SK-N-SH (cell line): ENCODE measurements at regions of chr10 and their contacts with region 1.

Region 1: GRCh38 chr10:97765201-97765600 is 6.6 kb downstream of the SFRP5 start:
- DNase-seq: no peak
- H3K4me3 ChIP-seq: no peak overlapping the region
- H3K27ac ChIP-seq: no peak overlapping the region
- H3K4me1 ChIP-seq: no peaks in the 10 kb centered on the region; a peak in 1 of 4 replicates
- H3K27me3 ChIP-seq: no peaks in the 10 kb centered on the region; the same call in 1 of the 2 replicates
- CTCF ChIP-seq: no peak
- EP300 ChIP-seq: no peak
- RAD21 ChIP-seq: no peak

Region 2: GRCh38 chr10:97543025-97543575 is 222.1 kb before region 1 on chr10:
- CTCF ChIA-PET with region 1: no interaction called
- POLR2A ChIA-PET with region 1: no interaction called
- DNase-seq: no peak
- H3K4me3 ChIP-seq: no peak overlapping the region
- H3K27ac ChIP-seq: peak overlapping the region; percentile 77 to 100
- H3K4me1 ChIP-seq: peaks cover 19 to 56% of the 10 kb centered on the region in 2 experiments; a peak in 3 of 4 replicates
- H3K27me3 ChIP-seq: no peaks in the 10 kb centered on the region
- CTCF ChIP-seq: no peak
- EP300 ChIP-seq: peak in 1 of 2 experiments; percentile 90; a peak in 1 of 4 replicates
- RAD21 ChIP-seq: no peak

Region 3: DNA sequence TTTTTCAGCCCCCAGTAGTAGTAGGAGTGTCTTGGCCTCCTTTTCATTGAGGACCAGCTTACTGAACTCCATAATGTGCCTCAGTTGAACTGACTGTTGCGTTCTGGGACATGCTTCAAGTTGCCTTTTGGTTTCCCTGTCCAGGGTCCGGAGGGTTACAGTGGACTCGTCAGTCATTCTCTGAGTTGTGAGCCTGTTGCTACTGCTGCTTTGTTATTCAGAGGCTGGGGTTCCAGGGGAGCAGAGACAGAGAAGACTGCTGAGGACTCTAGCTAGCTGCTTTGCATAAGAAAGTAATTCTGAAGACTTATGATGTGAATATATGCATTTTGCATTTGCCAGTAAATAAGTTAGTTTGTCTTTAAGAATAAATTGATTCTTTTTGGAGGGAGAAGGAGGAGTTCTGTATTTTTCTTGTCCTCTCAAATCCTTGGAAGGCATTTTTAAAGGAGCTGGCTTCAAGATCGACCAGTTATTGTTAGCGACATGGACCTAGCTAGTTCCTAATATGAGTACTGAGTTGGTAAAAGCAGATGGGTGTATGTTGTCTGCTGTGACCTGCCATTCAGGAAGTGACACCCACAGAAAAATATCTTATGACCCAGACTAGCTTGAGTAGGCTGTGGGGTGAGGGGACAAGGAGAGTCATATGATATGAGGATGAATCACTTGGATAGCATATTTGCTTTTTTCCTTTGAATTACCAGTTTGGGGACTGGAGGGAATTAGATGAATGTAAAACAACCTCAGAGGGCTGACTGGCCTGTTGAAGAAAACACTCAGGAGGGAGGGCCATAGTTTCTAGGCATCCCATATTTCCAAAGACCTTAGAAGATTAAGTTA is 116.4 kb before region 1 on chr10:
- CTCF ChIA-PET with region 1: no interaction called
- POLR2A ChIA-PET with region 1: no interaction called
- DNase-seq: no peak
- H3K4me3 ChIP-seq: no peak overlapping the region
- H3K27ac ChIP-seq: peak overlapping the region; percentile 81 to 95
- H3K4me1 ChIP-seq: peaks cover 4 to 22% of the 10 kb centered on the region in 2 experiments; a peak in 3 of 4 replicates
- H3K27me3 ChIP-seq: no peaks in the 10 kb centered on the region
- CTCF ChIP-seq: no peak
- EP300 ChIP-seq: peak in 1 of 2 experiments; percentile 68; a peak in 1 of 4 replicates
- RAD21 ChIP-seq: no peak

Region 4: DNA sequence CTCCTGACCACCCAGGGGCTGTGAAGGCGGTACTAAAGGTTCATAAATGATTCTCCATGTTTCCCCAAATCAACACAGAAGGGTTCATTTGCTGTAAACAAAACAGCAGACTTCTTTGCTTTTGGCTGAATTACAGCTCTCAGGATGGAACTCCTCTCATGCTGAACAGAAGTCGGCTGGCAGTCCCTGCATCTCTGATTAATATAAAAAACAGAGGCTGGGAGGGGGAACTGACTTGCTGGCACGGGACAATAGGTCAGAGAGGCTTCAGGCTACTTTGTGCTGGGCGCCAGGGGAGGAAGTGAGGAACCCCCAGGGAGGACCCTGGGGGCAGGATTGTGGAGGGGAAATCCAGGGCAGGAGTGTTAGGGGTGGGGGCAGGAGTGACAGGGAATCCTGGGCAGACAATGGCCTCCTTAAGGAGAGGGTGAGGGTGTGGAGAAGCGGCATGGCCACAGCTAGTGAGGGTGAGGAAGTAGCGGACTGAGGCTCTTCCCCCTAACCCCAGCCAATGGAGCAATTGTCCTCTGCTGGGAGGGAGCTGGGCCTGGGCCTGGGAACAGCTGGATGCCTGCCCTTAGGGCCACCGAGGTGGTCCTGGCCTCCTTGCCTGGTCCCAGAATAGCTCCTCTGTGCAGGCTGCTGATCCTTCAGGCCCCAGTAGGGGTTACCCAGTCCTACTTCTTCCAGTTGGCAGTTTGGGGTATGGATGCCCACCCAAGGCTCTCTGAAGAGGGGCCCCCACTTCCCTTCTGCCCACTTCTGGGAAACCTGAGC is 15.8 kb after region 1 on chr10:
- CTCF ChIA-PET with region 1: interaction called, 13 read pairs
- POLR2A ChIA-PET with region 1: no interaction called
- DNase-seq: peak; percentile 57
- H3K4me3 ChIP-seq: no peak overlapping the region
- H3K27ac ChIP-seq: peak overlapping the region in 1 of 2 experiments; percentile 91; a peak in 2 of 4 replicates
- H3K4me1 ChIP-seq: peaks cover 0 to 36% of the 10 kb centered on the region in 2 experiments; a peak in 2 of 4 replicates
- H3K27me3 ChIP-seq: no peaks in the 10 kb centered on the region; the same call in 1 of the 2 replicates
- CTCF ChIP-seq: no peak
- EP300 ChIP-seq: no peak
- RAD21 ChIP-seq: no peak